AG04450 (cell line): ENCODE measurements at regions of chr14 and their contacts with region 1.

Region 1: GRCh38 chr14:52824507-52824906 is 33.1 kb upstream of the GNPNAT1 start:
- DNase-seq: no peak
- H3K4me3 ChIP-seq: no peak overlapping the region
- H3K27ac ChIP-seq: no peak overlapping the region
- H3K27me3 ChIP-seq: no peaks in the 10 kb centered on the region
- CTCF ChIP-seq: no peak

Region 2: GRCh38 chr14:52663850-52664249 is 160.7 kb before region 1 on chr14:
- CTCF ChIA-PET with region 1: no interaction called
- POLR2A ChIA-PET with region 1: no interaction called
- DNase-seq: no peak
- H3K4me3 ChIP-seq: no peak overlapping the region
- H3K27ac ChIP-seq: no peak overlapping the region
- H3K27me3 ChIP-seq: no peaks in the 10 kb centered on the region
- CTCF ChIP-seq: no peak

Region 3: DNA sequence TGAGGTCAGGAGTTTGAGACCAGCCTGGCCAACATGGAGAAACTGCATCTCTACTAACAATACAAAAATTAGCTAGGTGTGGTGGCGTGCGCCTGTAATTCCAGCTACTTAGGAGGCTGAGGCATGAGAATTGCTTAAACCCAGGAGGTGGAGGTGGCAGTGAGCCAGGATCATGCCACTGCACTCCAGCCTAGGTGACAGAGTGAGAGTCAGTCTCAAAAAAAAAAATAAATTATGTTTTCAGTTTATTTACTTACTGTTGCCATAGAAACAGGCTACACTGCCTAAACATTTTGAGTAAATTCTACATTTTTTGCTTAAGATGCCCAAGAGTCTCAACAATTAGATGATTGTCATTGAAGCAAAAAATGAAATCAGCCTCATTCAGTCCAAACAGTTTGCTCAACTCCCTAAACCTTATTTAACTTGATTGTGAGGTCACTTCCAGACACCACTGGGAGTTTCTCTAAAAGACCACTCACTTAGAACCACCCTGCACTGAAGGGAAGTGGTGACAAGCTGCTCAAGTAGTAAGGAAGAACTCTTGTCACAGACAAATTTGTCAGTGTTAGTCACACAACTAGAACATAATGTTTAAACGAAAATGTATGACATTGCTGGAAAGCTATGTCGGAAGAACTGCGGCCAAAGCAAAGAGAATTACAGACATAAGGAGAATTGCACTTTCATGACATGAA is 23.3 kb before region 1 on chr14:
- CTCF ChIA-PET with region 1: no interaction called
- POLR2A ChIA-PET with region 1: no interaction called
- DNase-seq: peak; percentile 39
- H3K4me3 ChIP-seq: no peak overlapping the region
- H3K27ac ChIP-seq: peak overlapping the region; percentile 58
- H3K27me3 ChIP-seq: no peaks in the 10 kb centered on the region
- CTCF ChIP-seq: no peak

Region 4: GRCh38 chr14:52961060-52961639 is 136.6 kb after region 1 on chr14:
- CTCF ChIA-PET with region 1: interaction called, 15 read pairs
- POLR2A ChIA-PET with region 1: no interaction called
- DNase-seq: peak; percentile 21
- H3K4me3 ChIP-seq: no peak overlapping the region
- H3K27ac ChIP-seq: no peak overlapping the region
- H3K27me3 ChIP-seq: no peaks in the 10 kb centered on the region
- CTCF ChIP-seq: peak; percentile 57

Region 5: DNA sequence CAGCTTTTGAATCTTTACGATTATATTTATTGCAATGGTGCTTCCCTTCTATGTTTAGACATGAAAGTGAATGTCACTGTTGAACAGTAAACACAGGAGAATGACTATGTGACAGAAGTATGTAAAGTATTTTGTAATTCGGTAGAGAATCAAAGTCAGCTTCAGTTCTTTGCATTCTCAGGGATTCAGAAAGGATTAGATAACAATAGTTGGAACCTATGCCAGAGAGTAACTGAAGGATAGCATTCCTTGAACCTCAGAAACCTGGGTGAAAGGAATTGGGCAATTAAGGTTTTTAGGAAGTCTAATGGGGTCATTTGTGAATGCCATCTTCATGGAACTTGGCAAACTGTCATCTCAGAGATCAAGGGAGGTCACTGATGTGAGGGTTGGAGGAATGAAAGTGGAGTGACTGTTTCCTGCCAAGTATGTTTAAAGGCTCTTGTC is 633.9 kb after region 1 on chr14:
- CTCF ChIA-PET with region 1: no interaction called
- POLR2A ChIA-PET with region 1: no interaction called
- DNase-seq: peak; percentile 32
- H3K4me3 ChIP-seq: no peak overlapping the region
- H3K27ac ChIP-seq: no peak overlapping the region
- H3K27me3 ChIP-seq: no peaks in the 10 kb centered on the region
- CTCF ChIP-seq: no peak